ENCODE measurements at regions of chr13 and their contacts with region 1.

Region 1: DNA sequence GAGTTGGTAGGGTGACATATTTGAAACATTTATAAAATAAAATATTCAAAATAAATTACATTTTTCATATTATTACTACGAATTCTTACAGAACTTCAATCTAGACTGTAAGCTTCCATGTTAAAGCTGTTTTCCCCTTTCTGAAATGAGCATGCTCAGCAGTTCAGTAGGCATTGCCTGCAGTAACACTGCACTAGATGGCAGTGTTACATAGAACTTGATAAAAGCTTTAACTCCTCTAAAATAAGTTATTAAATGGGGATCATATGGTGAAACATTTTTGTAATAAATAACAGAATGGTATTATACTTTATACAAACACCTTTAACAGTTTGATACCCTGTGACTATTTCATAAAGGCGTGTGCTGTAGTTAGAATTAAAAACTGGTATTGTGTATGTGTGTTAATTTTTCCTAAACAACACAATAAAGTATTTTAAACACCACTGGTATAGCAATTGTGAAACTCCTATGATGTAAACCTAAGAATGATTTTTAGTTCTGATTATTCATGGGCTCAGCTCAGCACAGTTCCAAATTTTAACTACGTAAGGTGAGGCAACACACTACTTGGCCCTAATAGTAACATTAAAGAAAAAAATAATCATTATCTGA is 11.6 kb upstream of the GPR18 start:
- DNase-seq: peak in 4 of 9 experiments; percentile 26 to 84 (median 58)
- ATAC-seq: peak; percentile 68
- H3K4me3 ChIP-seq: no peak overlapping the region
- H3K4me3 Mint-ChIP-seq: no peak overlapping the region
- H3K27ac ChIP-seq: no peak overlapping the region
- H3K27ac Mint-ChIP-seq: peak overlapping the region; percentile 92
- H3K4me1 ChIP-seq: peaks cover 54% of the 10 kb centered on the region
- H3K4me1 Mint-ChIP-seq: peaks cover 63% of the 10 kb centered on the region
- H3K27me3 ChIP-seq: no peaks in the 10 kb centered on the region
- H3K27me3 Mint-ChIP-seq: no peaks in the 10 kb centered on the region
- CTCF ChIP-seq: peak; percentile 91

Region 2: GRCh38 chr13:99182439-99182838 is 87.3 kb before region 1 on chr13:
- CTCF ChIA-PET with region 1: interaction called, 375 read pairs
- POLR2A ChIA-PET with region 1: interaction called, 23 read pairs
- intact Hi-C with region 1: no loop called
- DNase-seq: no peak
- ATAC-seq: no peak
- H3K4me3 ChIP-seq: no peak overlapping the region
- H3K4me3 Mint-ChIP-seq: no peak overlapping the region
- H3K27ac ChIP-seq: no peak overlapping the region
- H3K27ac Mint-ChIP-seq: no peak overlapping the region
- H3K4me1 ChIP-seq: peaks cover 34% of the 10 kb centered on the region
- H3K4me1 Mint-ChIP-seq: peaks cover 33% of the 10 kb centered on the region
- H3K27me3 ChIP-seq: no peaks in the 10 kb centered on the region
- H3K27me3 Mint-ChIP-seq: no peaks in the 10 kb centered on the region
- CTCF ChIP-seq: no peak

Region 3: DNA sequence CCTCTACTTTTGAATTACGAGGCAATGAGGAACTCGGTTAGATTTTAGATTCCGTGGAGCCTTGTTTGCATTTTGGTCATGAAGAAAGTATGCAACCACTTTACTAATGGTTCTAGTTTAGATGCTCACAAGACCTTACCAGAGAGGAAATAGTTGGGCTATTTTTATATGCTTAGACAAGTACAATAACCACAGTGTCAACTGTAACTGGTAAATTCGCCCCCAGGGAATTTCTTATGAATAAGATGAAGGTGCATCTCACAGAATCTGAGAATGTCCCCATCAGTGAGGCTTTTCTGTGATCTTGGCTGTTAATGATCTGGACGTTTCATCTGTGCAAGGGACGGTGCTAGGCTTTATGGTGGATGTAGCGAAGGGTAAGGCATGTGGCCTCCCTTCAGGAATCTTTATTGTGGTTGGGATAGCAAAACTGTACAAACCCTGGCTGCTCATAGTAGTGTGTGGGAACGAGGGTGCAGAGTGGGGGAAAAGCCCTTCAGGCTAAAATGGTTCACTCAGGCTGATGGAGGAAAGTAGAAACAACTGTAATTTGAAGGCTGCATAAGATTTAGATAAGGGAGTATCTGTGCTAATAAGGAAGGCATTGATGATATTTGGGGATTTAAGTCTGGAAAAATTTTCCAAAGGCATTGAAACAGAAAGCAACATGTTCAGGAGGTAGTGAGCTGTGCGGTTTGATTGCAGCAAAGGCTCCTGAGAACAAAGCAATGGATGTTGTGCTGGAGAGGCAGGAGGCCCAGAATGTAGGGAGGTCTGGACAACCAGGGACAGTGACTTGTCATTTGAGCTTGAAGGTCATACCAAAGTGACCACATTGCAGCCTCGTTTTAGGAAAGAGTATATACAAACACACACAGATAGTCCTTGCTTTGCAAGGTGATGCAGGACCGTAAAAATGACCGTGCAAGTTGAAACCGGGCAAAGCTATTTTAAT is 40.7 kb before region 1 on chr13:
- CTCF ChIA-PET with region 1: interaction called, 17 read pairs
- POLR2A ChIA-PET with region 1: interaction called, 4 read pairs
- intact Hi-C with region 1: no loop called
- DNase-seq: peak in 2 of 9 experiments; percentile 60 to 76
- ATAC-seq: peak; percentile 48
- H3K4me3 ChIP-seq: peak overlapping the region; percentile 17 to 31
- H3K4me3 Mint-ChIP-seq: peak overlapping the region; percentile 68
- H3K27ac ChIP-seq: peak overlapping the region in 1 of 2 experiments; percentile 69
- H3K27ac Mint-ChIP-seq: peak overlapping the region; percentile 87
- H3K4me1 ChIP-seq: peaks cover 85% of the 10 kb centered on the region
- H3K4me1 Mint-ChIP-seq: peaks cover 78% of the 10 kb centered on the region
- H3K27me3 ChIP-seq: no peaks in the 10 kb centered on the region
- H3K27me3 Mint-ChIP-seq: no peaks in the 10 kb centered on the region
- CTCF ChIP-seq: no peak

Region 4: GRCh38 chr13:99296398-99296797 is 26.7 kb after region 1 on chr13:
- CTCF ChIA-PET with region 1: interaction called, 10 read pairs
- POLR2A ChIA-PET with region 1: interaction called, 4 read pairs
- intact Hi-C with region 1: no loop called
- DNase-seq: peak in 2 of 9 experiments; percentile 48 to 70
- ATAC-seq: peak; percentile 80
- H3K4me3 ChIP-seq: peak overlapping the region; percentile 1 to 2
- H3K4me3 Mint-ChIP-seq: peak overlapping the region; percentile 78
- H3K27ac ChIP-seq: peak overlapping the region in 1 of 2 experiments; percentile 49
- H3K27ac Mint-ChIP-seq: peak overlapping the region; percentile 93
- H3K4me1 ChIP-seq: peaks cover 64% of the 10 kb centered on the region
- H3K4me1 Mint-ChIP-seq: peaks cover 81% of the 10 kb centered on the region
- H3K27me3 ChIP-seq: no peaks in the 10 kb centered on the region
- H3K27me3 Mint-ChIP-seq: no peaks in the 10 kb centered on the region
- CTCF ChIP-seq: no peak

Region 5: DNA sequence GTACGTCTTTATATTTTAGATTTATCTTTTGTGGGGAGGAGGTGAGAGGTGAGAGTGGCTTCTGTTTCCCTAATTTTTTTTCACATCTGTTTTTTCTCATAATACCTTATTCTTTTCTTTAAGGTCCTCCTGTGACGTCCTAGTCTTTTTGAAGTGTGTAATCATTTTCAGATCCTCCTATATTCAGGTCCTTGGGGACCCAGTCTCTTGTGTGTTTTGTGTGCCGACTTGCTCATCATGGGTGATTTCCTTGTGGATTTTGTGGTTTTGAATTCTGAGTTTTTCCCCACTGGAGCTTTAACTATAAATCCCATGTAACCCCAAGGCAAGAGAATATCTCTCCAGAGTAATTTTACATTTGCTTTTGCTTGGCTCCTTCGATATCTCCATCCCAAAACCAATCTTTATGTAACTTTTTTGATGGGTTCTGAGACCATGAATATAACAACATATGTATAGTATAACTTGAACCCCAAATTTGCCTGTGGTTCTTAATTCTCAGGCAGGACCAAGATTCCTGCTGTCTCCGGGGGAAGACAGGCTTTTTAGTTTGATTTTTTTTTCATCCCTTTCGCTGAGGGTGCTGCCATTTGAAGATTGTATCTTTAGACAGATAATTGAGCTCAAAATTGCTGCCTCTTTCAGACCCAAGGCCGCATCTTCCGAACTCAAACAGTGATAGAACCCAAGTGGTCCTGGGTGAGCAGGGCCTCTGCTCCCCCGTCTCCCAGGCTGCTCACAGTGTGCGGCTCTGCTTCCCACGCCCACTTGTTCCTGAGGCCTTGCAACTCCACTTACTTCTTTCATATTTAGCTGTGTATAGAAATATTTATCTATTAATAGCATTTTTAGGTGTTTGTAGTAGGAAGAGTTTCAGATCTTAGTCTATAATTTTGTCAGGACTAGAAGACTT is 96.6 kb after region 1 on chr13:
- CTCF ChIA-PET with region 1: interaction called, 17 read pairs
- POLR2A ChIA-PET with region 1: no interaction called
- intact Hi-C with region 1: no loop called
- DNase-seq: peak in 4 of 9 experiments; percentile 10 to 53 (median 28)
- ATAC-seq: no peak
- H3K4me3 ChIP-seq: no peak overlapping the region
- H3K4me3 Mint-ChIP-seq: peak overlapping the region; percentile 53
- H3K27ac ChIP-seq: peak overlapping the region; percentile 24 to 61
- H3K27ac Mint-ChIP-seq: peak overlapping the region; percentile 97
- H3K4me1 ChIP-seq: peaks cover 78% of the 10 kb centered on the region
- H3K4me1 Mint-ChIP-seq: peaks cover 88% of the 10 kb centered on the region
- H3K27me3 ChIP-seq: no peaks in the 10 kb centered on the region
- H3K27me3 Mint-ChIP-seq: no peaks in the 10 kb centered on the region
- CTCF ChIP-seq: no peak

Region 6: GRCh38 chr13:99406799-99407201 is 137.1 kb after region 1 on chr13:
- CTCF ChIA-PET with region 1: interaction called, 11 read pairs
- POLR2A ChIA-PET with region 1: no interaction called
- intact Hi-C with region 1: no loop called
- DNase-seq: no peak
- ATAC-seq: no peak
- H3K4me3 ChIP-seq: no peak overlapping the region
- H3K4me3 Mint-ChIP-seq: no peak overlapping the region
- H3K27ac ChIP-seq: no peak overlapping the region
- H3K27ac Mint-ChIP-seq: peak overlapping the region; percentile 58
- H3K4me1 ChIP-seq: peaks cover 8% of the 10 kb centered on the region
- H3K4me1 Mint-ChIP-seq: peaks cover 37% of the 10 kb centered on the region
- H3K27me3 ChIP-seq: no peaks in the 10 kb centered on the region
- H3K27me3 Mint-ChIP-seq: no peaks in the 10 kb centered on the region
- CTCF ChIP-seq: no peak

Region 7: GRCh38 chr13:100176801-100177400 is 907.2 kb after region 1 on chr13:
- CTCF ChIA-PET with region 1: no interaction called
- POLR2A ChIA-PET with region 1: no interaction called
- intact Hi-C with region 1: no loop called
- DNase-seq: no peak
- ATAC-seq: no peak
- H3K4me3 ChIP-seq: no peak overlapping the region
- H3K4me3 Mint-ChIP-seq: no peak overlapping the region
- H3K27ac ChIP-seq: no peak overlapping the region
- H3K27ac Mint-ChIP-seq: no peak overlapping the region
- H3K4me1 ChIP-seq: no peaks in the 10 kb centered on the region
- H3K4me1 Mint-ChIP-seq: peaks cover 2% of the 10 kb centered on the region
- H3K27me3 ChIP-seq: no peaks in the 10 kb centered on the region
- H3K27me3 Mint-ChIP-seq: no peaks in the 10 kb centered on the region
- CTCF ChIP-seq: no peak

Region 8: GRCh38 chr13:100514788-100515409 is 1245.2 kb after region 1 on chr13:
- CTCF ChIA-PET with region 1: no interaction called
- POLR2A ChIA-PET with region 1: no interaction called
- intact Hi-C with region 1: loop called in 1 of 2 experiments (anchors 10 kb)
- DNase-seq: peak; percentile 29 to 82 (median 74)
- ATAC-seq: peak; percentile 96
- H3K4me3 ChIP-seq: no peak overlapping the region
- H3K4me3 Mint-ChIP-seq: no peak overlapping the region
- H3K27ac ChIP-seq: no peak overlapping the region
- H3K27ac Mint-ChIP-seq: no peak overlapping the region
- H3K4me1 ChIP-seq: no peaks in the 10 kb centered on the region
- H3K4me1 Mint-ChIP-seq: peaks cover 13% of the 10 kb centered on the region
- H3K27me3 ChIP-seq: no peaks in the 10 kb centered on the region
- H3K27me3 Mint-ChIP-seq: no peaks in the 10 kb centered on the region
- CTCF ChIP-seq: peak; percentile 97